ENCODE measurements at regions of chr1 and their contacts with region 1.

Region 1: GRCh38 chr1:115642168-115643072 is 650 bp downstream of the VANGL1 start:
- DNase-seq: peak; percentile 56
- ATAC-seq: peak; percentile 56
- H3K4me3 ChIP-seq: peak overlapping the region; percentile 76
- H3K27ac ChIP-seq: peak overlapping the region; percentile 33
- H3K4me1 ChIP-seq: peaks cover 29% of the 10 kb centered on the region
- H3K27me3 ChIP-seq: no peaks in the 10 kb centered on the region
- CTCF ChIP-seq: 0 out of 2 replicates have a peak, but pooled peaks have one; percentile 25

Region 2: GRCh38 chr1:115671176-115671934 is 28.9 kb after region 1 on chr1:
- CTCF ChIA-PET with region 1: no interaction called
- POLR2A ChIA-PET with region 1: no interaction called
- intact Hi-C with region 1: loop called (anchors 2 kb)
- DNase-seq: peak; percentile 86
- ATAC-seq: peak; percentile 79
- H3K4me3 ChIP-seq: peak overlapping the region; percentile 38; the same call in 1 of the 2 replicates
- H3K27ac ChIP-seq: peak overlapping the region; percentile 94
- H3K4me1 ChIP-seq: peaks cover 58% of the 10 kb centered on the region
- H3K27me3 ChIP-seq: no peaks in the 10 kb centered on the region
- CTCF ChIP-seq: peak; percentile 31; the same call in 1 of the 2 replicates